ENCODE measurements at regions of chr9 and their contacts with region 1.

Region 1: DNA sequence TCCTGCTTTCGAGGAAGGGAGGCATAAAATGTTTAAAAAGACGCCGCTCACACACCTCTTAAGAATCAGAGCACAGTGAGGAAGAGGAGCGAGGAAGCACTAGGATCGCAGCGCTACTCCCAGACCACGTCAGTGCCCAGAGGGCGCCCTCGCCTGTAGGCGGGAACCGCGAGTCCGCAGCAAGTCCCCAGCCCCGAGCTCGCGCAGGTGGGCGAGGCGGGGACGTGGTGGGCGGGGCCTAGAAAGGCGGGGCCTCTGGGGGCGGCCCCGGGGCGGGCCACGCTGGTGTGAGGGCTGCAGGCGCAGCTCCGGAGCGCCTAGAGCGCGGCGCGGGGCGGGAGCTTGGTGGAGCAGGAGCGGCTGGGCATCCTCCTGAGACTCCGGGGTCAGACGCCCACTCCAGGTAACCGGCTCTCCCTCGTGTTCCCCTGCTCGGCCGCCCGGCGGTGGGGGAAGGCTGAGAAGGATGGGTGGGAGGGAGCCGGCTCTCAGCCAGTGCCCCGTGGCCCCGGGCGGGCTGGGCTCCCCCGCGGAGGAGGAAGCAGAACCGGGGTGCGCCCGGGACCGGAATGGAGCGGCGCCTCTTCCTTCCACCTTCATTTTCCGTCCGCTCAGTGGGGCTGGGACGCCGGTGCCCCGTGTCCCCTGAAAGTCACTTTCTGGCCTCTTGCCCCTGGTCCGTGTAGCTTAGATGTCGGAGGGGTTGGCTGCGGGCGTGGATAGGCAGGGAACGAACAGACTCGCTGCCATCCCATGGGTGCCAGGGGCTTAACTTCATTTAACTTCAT is at the start of gene GCNT1:
- DNase-seq: peak; percentile 93
- H3K4me3 ChIP-seq: peak within 1 kb of the TSS; percentile 71 to 87 (median 75)
- H3K27ac ChIP-seq: peak within 1 kb of the TSS; percentile 64
- H3K4me1 ChIP-seq: peaks cover 23% of the 10 kb centered on the region
- H3K27me3 ChIP-seq: no peaks in the 10 kb centered on the region
- CTCF ChIP-seq: peak; percentile 21 to 55
- POLR2A ChIP-seq: peak; percentile 73
- total RNA-seq, gene GCNT1: 11.0 and 18.1 TPM in 2 replicates

Region 2: DNA sequence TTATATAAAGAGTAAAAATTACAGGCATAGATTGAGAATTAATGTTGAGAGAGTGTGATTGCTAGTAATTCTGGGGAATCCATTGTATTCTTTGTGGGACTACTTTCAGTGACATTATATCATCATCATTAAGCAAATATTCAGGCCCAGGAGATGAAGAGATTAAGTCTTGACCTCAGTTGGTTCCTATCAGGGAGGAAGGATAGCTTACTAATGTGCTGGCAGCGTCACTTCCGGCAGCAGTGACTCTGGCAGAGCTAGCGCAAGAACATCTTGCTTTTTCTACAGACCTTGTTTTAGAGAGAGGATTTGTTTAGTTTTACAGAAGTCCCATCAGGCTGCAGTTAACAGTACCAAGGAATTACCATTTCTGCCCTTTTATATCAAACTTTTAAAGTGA is 1350.5 kb before region 1 on chr9:
- CTCF ChIA-PET with region 1: no interaction called
- POLR2A ChIA-PET with region 1: no interaction called
- dilution Hi-C with region 1: no loop called
- intact Hi-C with region 1: loop called (anchors 5 kb)
- DNase-seq: peak; percentile 80
- H3K4me3 ChIP-seq: peak overlapping the region in 1 of 3 experiments; percentile 23
- H3K27ac ChIP-seq: peak overlapping the region; percentile 73
- H3K4me1 ChIP-seq: peaks cover 33% of the 10 kb centered on the region
- H3K27me3 ChIP-seq: no peaks in the 10 kb centered on the region
- CTCF ChIP-seq: no peak
- POLR2A ChIP-seq: peak; percentile 26

Region 3: GRCh38 chr9:76393963-76394679 is 65.0 kb before region 1 on chr9 and contains the start of gene RFK:
- CTCF ChIA-PET with region 1: interaction called, 5 read pairs
- POLR2A ChIA-PET with region 1: no interaction called
- dilution Hi-C with region 1: no loop called
- intact Hi-C with region 1: loop called (anchors 1 kb)
- DNase-seq: peak; percentile 95
- H3K4me3 ChIP-seq: peak within 1 kb of the TSS; percentile 49 to 87 (median 77)
- H3K27ac ChIP-seq: peak within 1 kb of the TSS; percentile 95
- H3K4me1 ChIP-seq: peaks cover 23% of the 10 kb centered on the region
- H3K27me3 ChIP-seq: no peaks in the 10 kb centered on the region
- CTCF ChIP-seq: peak; percentile 17 to 46
- POLR2A ChIP-seq: peak; percentile 89
- total RNA-seq, gene RFK: 32.9 and 39.7 TPM in 2 replicates

Region 4: GRCh38 chr9:76475686-76476085 is 16.6 kb after region 1 on chr9:
- CTCF ChIA-PET with region 1: interaction called, 8 read pairs
- POLR2A ChIA-PET with region 1: no interaction called
- dilution Hi-C with region 1: no loop called
- intact Hi-C with region 1: loop called (anchors 2 kb)
- DNase-seq: no peak
- H3K4me3 ChIP-seq: no peak overlapping the region
- H3K27ac ChIP-seq: no peak overlapping the region
- H3K4me1 ChIP-seq: no peaks in the 10 kb centered on the region
- H3K27me3 ChIP-seq: no peaks in the 10 kb centered on the region
- CTCF ChIP-seq: no peak
- POLR2A ChIP-seq: no peak

Region 5: GRCh38 chr9:76534026-76534425 is 74.9 kb after region 1 on chr9:
- CTCF ChIA-PET with region 1: no interaction called
- POLR2A ChIA-PET with region 1: no interaction called
- dilution Hi-C with region 1: no loop called
- intact Hi-C with region 1: no loop called
- DNase-seq: no peak
- H3K4me3 ChIP-seq: no peak overlapping the region
- H3K27ac ChIP-seq: no peak overlapping the region
- H3K4me1 ChIP-seq: no peaks in the 10 kb centered on the region
- H3K27me3 ChIP-seq: no peaks in the 10 kb centered on the region
- CTCF ChIP-seq: no peak
- POLR2A ChIP-seq: no peak

Region 6: DNA sequence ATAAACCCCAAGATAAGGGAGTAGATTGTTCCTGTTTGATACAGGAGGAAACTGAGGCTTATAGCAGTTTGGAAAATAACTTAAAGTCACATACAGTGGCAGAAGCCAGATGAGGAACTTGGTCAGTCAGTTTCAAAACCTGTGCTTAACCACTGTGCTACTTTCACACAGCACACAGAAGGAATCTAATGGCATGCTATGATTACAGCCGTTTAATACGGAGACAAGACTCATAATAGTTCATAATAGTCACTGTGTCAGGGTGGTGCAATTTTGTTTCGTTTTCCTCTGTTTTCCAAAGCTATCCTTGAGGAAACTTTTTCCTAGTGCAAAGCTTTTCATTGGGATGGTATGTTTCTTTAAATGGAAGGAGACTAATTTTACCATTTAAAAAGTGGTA is 112.2 kb after region 1 on chr9:
- CTCF ChIA-PET with region 1: no interaction called
- POLR2A ChIA-PET with region 1: no interaction called
- dilution Hi-C with region 1: no loop called
- intact Hi-C with region 1: loop called (anchors 5 kb)
- DNase-seq: peak; percentile 40
- H3K4me3 ChIP-seq: peak overlapping the region; percentile 47 to 71 (median 69)
- H3K27ac ChIP-seq: no peak overlapping the region
- H3K4me1 ChIP-seq: no peaks in the 10 kb centered on the region
- H3K27me3 ChIP-seq: no peaks in the 10 kb centered on the region
- CTCF ChIP-seq: no peak
- POLR2A ChIP-seq: no peak

Region 7: DNA sequence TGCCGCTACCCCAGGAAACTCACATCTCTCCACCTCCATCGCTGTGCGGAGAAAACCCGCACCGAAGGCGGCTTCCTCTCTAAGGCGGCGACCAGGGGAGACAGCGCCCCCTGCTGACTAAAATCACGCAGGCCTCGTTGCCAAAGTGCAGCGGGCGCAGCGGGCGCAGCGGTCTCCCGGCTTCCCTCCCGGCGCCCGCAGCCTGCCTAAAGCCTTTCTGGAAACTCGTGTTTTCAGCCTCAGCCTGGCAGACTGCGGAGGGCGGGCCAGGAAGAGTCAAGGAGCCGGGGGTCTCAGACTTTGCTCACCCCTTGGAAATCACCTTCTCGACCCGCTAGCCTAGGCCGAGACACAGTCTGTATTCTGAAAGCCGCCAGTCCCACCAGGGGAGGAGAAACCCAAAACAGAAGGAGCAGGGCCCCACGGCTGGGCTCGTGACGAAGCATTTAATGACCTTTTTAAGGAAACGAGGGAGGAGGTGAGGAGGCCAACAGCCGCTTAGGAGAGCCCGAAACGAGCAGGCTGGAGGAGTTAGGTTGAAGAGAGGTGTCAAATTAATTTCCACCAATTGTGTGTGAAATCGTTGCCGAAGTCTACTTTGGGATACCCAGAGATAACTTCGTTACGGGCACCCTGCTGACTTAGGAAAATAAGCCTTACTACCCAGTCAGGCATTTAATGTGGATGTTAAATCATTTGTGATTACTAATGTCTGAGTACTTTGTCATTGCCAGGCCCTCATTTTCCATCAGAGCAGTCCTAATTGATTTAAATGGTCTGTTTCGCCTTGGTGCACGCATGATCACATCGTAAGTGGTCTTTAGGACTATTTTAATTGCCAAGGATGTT is 553.1 kb after region 1 on chr9:
- CTCF ChIA-PET with region 1: no interaction called
- POLR2A ChIA-PET with region 1: no interaction called
- dilution Hi-C with region 1: no loop called
- intact Hi-C with region 1: loop called (anchors 10 kb)
- DNase-seq: peak; percentile 54
- H3K4me3 ChIP-seq: no peak overlapping the region
- H3K27ac ChIP-seq: no peak overlapping the region
- H3K4me1 ChIP-seq: peaks cover 7% of the 10 kb centered on the region
- H3K27me3 ChIP-seq: peaks cover 70 to 91% of the 10 kb centered on the region in 2 experiments
- CTCF ChIP-seq: peak; percentile 87 to 90
- POLR2A ChIP-seq: no peak